ENCODE measurements at regions of chr16 and their contacts with region 1.

Region 1: GRCh38 chr16:8797364-8798173 is at the starts of genes PMM2 and TMEM186:
- DNase-seq: peak; percentile 97
- H3K4me3 Mint-ChIP-seq: peak within 1 kb of the TSS; percentile 93
- H3K27ac Mint-ChIP-seq: peak within 1 kb of the TSS; percentile 71
- H3K4me1 Mint-ChIP-seq: peaks cover 38% of the 10 kb centered on the region
- H3K27me3 Mint-ChIP-seq: no peaks in the 10 kb centered on the region
- total RNA-seq, gene PMM2: 41.7 to 41.8 TPM
- total RNA-seq, gene TMEM186: 12.2 to 12.6 TPM

Region 2: GRCh38 chr16:8611886-8612600 is 185.5 kb before region 1 on chr16:
- CTCF ChIA-PET with region 1: no interaction called
- POLR2A ChIA-PET with region 1: no interaction called
- DNase-seq: no peak
- H3K4me3 Mint-ChIP-seq: no peak overlapping the region
- H3K27ac Mint-ChIP-seq: no peak overlapping the region
- H3K4me1 Mint-ChIP-seq: no peaks in the 10 kb centered on the region
- H3K27me3 Mint-ChIP-seq: peaks cover 21% of the 10 kb centered on the region

Region 3: DNA sequence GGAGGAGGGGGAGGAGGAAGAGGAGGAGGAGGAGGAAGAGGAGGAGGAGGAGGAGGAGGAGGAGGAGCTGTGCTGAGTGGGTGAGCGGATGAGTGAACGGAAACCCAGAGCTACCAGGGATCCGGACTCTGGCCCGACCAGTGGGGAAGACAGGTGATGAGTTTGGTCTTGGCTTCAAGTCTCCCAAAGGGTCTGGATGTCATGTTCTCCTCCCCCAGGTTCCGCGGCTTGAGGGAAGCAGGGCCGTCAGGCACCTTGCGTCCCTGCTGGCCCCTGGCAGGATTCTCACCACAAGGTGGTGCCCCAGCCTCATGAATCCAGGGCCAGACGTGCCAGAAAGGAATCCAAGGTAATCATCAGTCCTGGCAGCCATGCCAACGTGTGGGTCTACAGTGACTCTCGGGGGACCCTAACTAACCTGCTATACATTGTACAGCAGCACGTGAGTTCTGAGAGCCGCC is 136.7 kb before region 1 on chr16:
- CTCF ChIA-PET with region 1: interaction called, 12 read pairs
- POLR2A ChIA-PET with region 1: no interaction called
- DNase-seq: peak; percentile 64
- H3K4me3 Mint-ChIP-seq: no peak overlapping the region
- H3K27ac Mint-ChIP-seq: no peak overlapping the region
- H3K4me1 Mint-ChIP-seq: no peaks in the 10 kb centered on the region
- H3K27me3 Mint-ChIP-seq: no peaks in the 10 kb centered on the region

Region 4: GRCh38 chr16:8818504-8819270 is 21.1 kb after region 1 on chr16:
- CTCF ChIA-PET with region 1: interaction called, 6 read pairs
- POLR2A ChIA-PET with region 1: interaction called, 16 read pairs
- DNase-seq: no peak
- H3K4me3 Mint-ChIP-seq: no peak overlapping the region
- H3K27ac Mint-ChIP-seq: peak overlapping the region; percentile 17
- H3K4me1 Mint-ChIP-seq: peaks cover 40% of the 10 kb centered on the region
- H3K27me3 Mint-ChIP-seq: no peaks in the 10 kb centered on the region